ENCODE measurements at regions of chr19 and their contacts with region 1.

Region 1: GRCh38 chr19:13428336-13428735 is 77.9 kb downstream of the CACNA1A start:
- DNase-seq: no peak
- H3K4me3 ChIP-seq: no peak overlapping the region
- H3K27ac ChIP-seq: no peak overlapping the region
- H3K4me1 ChIP-seq: no peaks in the 10 kb centered on the region
- H3K27me3 ChIP-seq: no peaks in the 10 kb centered on the region
- CTCF ChIP-seq: peak in 2 of 3 experiments; percentile 5 to 10

Region 2: GRCh38 chr19:13302526-13303270 is 125.6 kb before region 1 on chr19:
- intact Hi-C with region 1: loop called (anchors 10 kb)
- DNase-seq: no peak
- H3K4me3 ChIP-seq: no peak overlapping the region
- H3K27ac ChIP-seq: no peak overlapping the region
- H3K4me1 ChIP-seq: no peaks in the 10 kb centered on the region
- H3K27me3 ChIP-seq: no peaks in the 10 kb centered on the region
- CTCF ChIP-seq: no peak

Region 3: DNA sequence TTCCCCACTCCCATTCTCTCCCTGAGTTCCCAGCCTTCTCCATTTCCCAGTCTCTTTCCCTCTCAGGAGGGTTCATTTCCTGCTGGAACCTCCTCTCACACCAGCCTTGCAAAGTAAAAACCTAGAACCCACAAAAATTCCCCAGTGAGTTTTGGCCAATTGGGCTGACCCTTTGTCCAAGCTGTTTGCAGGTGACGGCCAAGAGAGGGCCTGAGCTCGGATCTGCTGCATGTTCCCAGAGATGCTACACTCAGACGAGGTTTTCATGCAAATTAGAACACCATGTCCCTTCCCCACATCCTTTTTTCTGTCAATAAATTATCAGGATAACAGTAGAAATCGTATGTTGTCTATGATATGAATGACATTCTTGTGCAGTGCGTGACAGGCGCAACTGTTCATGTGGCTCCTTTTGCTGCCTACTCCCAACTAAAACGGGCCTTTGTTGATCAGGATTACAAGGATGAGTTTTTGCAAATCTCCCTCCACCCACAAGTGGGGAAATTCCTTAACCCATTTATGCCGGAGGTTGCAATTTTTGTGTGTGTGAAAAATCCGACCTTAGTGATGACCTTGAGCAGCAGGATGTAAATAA is 71.6 kb before region 1 on chr19:
- intact Hi-C with region 1: no loop called
- DNase-seq: no peak
- H3K4me3 ChIP-seq: no peak overlapping the region
- H3K27ac ChIP-seq: no peak overlapping the region
- H3K4me1 ChIP-seq: no peaks in the 10 kb centered on the region
- H3K27me3 ChIP-seq: no peaks in the 10 kb centered on the region
- CTCF ChIP-seq: no peak

Region 4: DNA sequence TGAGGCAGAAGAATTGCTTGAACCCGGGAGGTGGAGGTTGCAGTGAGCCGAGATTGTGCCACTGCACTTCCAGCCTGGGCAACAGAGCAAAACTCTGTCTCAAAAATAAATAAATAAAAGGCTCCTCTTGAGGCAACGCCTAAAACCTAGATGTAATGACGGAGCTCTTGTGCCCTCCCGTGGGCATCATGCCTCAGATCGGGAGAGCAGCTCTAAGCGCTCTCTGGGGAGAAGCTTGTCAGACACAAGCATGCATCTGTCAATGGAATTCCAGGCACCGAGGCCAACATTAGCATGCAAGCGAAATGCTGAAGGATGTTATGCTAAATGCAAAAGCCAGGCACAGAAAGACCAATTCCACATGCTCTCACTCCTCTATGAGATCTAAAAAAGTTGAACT is 290.4 kb after region 1 on chr19:
- intact Hi-C with region 1: no loop called
- DNase-seq: no peak
- H3K4me3 ChIP-seq: no peak overlapping the region
- H3K27ac ChIP-seq: no peak overlapping the region
- H3K4me1 ChIP-seq: peaks cover 0 to 3% of the 10 kb centered on the region in 2 donors
- H3K27me3 ChIP-seq: no peaks in the 10 kb centered on the region
- CTCF ChIP-seq: peak; percentile 20 to 49 (median 27)